ENCODE measurements at regions of chr12 and their contacts with region 1.

Region 1: GRCh38 chr12:46843811-46844210 is 18.0 kb upstream of the SLC38A4 start:
- DNase-seq: no peak
- ATAC-seq: peak; percentile 53 to 85 (median 66)
- H3K4me3 ChIP-seq: no peak overlapping the region
- H3K27ac ChIP-seq: peak overlapping the region; percentile 4
- H3K4me1 ChIP-seq: peaks cover 10% of the 10 kb centered on the region
- H3K27me3 ChIP-seq: no peaks in the 10 kb centered on the region
- CTCF ChIP-seq: no peak

Region 2: GRCh38 chr12:46886541-46887041 is 42.8 kb after region 1 on chr12:
- intact Hi-C with region 1: loop called in 1 of 2 experiments (anchors 5 kb)
- DNase-seq: no peak
- ATAC-seq: no peak
- H3K4me3 ChIP-seq: no peak overlapping the region
- H3K27ac ChIP-seq: no peak overlapping the region
- H3K4me1 ChIP-seq: no peaks in the 10 kb centered on the region
- H3K27me3 ChIP-seq: no peaks in the 10 kb centered on the region
- CTCF ChIP-seq: no peak

Region 3: DNA sequence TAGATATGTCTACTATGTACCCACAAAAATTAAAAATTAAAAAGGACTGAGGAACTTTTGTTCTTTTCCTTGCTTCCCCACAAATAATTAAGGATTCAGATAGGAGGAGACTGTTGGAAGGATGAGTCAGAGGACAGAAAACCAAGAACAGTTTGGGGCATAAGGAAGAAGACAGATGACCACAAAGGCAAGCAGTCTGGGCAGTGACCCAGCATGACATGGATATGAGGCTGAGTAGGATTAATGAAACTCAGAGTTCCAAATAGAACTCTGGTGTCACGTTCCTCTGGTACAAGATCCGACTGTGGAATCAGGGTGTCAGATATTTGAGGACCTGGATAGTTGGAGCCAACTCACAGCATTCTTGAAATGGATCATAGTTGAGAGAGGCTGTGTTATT is 71.3 kb after region 1 on chr12:
- intact Hi-C with region 1: no loop called
- DNase-seq: peak; percentile 74 to 90
- ATAC-seq: peak; percentile 97 to 99 (median 99)
- H3K4me3 ChIP-seq: no peak overlapping the region
- H3K27ac ChIP-seq: peak overlapping the region; percentile 80
- H3K4me1 ChIP-seq: peaks cover 21% of the 10 kb centered on the region
- H3K27me3 ChIP-seq: no peaks in the 10 kb centered on the region
- CTCF ChIP-seq: no peak

Measured in psoas muscle (tissue), 8 donors.